Left lung (tissue), 14 donors: ENCODE measurements at regions of chr21 and their contacts with region 1.

Region 1: GRCh38 chr21:43975495-43975993 is 36.6 kb upstream of the TRAPPC10 start:
- DNase-seq: peak; percentile 38 to 93 (median 72)
- ATAC-seq: peak; percentile 79
- H3K4me3 ChIP-seq: no peak overlapping the region
- H3K27ac ChIP-seq: no peak overlapping the region
- H3K4me1 ChIP-seq: peaks cover 5 to 12% of the 10 kb centered on the region in 2 donors
- H3K27me3 ChIP-seq: no peaks in the 10 kb centered on the region
- CTCF ChIP-seq: peak; percentile 85 to 90

Region 2: DNA sequence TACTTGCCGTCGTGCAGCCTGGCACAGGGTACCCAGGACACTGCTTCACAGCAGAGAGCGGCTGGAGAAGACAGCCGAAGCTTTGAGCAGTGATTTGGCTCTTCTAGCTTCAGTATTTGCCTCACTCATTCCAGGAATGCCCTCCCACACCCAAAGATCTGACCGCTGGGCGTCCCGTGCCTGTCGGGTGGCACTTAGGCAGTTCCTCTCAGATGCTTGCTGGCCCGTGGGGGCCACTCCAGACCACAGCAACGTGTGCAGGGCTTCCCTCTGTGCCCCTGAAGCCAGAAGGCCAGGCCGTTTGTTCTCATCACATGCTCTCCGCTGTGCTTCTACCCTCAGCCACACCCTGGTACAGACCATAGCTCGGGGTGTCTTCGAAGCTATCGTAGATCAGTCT is 299.2 kb before region 1 on chr21:
- intact Hi-C with region 1: no loop called
- DNase-seq: no peak
- ATAC-seq: no peak
- H3K4me3 ChIP-seq: no peak overlapping the region
- H3K27ac ChIP-seq: no peak overlapping the region
- H3K4me1 ChIP-seq: no peaks in the 10 kb centered on the region
- H3K27me3 ChIP-seq: no peaks in the 10 kb centered on the region
- CTCF ChIP-seq: no peak

Region 3: DNA sequence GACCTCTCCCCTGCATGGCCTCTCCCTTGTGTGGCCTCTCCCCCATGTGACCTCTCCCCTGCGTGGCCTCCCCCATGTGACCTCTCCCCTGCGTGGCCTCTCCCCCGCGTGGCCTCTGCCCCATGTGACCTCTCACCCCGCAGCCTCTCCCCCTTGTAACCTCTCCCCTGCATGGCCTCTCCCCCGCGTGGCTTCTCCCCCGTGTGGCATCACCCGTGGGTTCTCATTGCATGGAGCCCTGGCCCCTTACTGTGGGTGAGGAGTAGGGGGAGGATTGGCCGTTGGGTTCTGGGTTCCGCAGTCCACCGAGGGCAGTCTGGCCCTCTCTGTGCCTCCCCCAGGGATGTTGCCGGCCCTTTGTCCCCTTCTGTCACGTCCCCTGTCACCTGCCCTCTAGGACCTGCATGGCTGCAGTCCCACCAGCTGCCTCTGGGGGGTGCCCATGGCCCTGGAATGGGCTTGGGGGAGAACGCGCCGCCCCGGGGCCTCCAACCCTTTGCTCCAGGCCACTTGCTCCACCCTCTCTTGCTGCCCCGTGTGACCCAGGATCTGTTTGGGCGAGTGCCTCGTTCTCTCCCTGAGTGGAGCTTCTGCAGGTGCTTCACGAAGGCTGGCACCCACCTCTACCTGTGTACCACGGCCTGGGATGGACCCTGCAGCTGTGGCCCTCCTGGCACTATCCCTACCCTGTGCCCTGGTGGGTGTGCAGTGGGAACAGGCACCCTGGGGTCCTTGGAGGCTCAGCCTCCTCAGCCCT is 164.9 kb before region 1 on chr21:
- intact Hi-C with region 1: loop called in 1 of 2 experiments (anchors 5 kb)
- DNase-seq: peak; percentile 50 to 97 (median 78)
- ATAC-seq: peak; percentile 93
- H3K4me3 ChIP-seq: peak overlapping the region in 1 of 2 donors; percentile 40
- H3K27ac ChIP-seq: no peak overlapping the region
- H3K4me1 ChIP-seq: peaks cover 19 to 31% of the 10 kb centered on the region in 2 donors
- H3K27me3 ChIP-seq: no peaks in the 10 kb centered on the region
- CTCF ChIP-seq: peak; percentile 93 to 97